GM13977 (cell line): ENCODE measurements at regions of chr18 and their contacts with region 1.

Region 1: GRCh38 chr18:63439334-63439733 is 17.1 kb upstream of the VPS4B start:
- DNase-seq: peak; percentile 58
- CTCF ChIP-seq: peak; percentile 79

Region 2: GRCh38 chr18:62714671-62715435 is 724.5 kb before region 1 on chr18:
- in situ Hi-C with region 1: loop called (anchors 25 kb)
- DNase-seq: peak; percentile 94
- CTCF ChIP-seq: peak; percentile 80

Region 3: DNA sequence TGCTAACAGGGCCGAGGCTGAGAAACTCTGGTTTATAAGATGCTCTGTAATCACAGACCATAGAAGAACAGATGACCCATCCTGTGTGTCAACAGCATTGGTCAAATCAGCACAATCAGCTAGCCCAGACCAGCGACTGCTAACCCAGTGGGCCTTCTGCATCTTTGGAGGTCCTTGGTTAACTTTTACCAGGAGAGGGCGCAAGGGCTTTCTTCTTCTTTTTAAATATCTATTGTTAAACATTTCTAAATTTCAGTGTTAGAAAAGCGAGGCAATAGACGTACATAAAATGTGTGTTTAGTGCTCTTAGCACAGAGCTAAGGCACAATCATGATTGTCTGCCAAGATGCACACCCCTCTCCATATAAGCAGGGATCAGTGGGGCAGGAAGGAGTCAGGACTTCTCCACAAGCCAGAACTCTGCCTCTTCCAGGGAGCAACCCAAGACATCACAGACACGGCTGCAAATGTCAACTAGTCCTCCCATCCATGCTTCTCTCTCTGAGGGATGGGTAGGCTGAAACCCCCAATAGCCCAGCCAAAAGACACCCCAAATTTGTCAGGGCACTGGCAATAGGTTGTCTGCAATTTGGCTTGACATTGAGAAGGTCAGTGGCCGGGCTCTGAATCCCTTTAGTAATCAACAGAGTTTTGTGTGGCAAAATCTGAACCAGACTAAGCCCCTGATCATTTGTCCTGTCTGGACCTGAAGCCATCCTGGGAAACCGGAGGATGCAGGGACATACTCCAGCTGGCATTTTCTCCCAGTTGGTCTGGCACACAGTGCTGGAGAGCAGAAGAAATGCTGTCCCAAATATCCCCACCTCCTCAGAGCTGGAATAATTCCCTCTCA is 308.0 kb before region 1 on chr18:
- in situ Hi-C with region 1: loop called (anchors 25 kb)
- DNase-seq: peak; percentile 51
- CTCF ChIP-seq: peak; percentile 52

Region 4: DNA sequence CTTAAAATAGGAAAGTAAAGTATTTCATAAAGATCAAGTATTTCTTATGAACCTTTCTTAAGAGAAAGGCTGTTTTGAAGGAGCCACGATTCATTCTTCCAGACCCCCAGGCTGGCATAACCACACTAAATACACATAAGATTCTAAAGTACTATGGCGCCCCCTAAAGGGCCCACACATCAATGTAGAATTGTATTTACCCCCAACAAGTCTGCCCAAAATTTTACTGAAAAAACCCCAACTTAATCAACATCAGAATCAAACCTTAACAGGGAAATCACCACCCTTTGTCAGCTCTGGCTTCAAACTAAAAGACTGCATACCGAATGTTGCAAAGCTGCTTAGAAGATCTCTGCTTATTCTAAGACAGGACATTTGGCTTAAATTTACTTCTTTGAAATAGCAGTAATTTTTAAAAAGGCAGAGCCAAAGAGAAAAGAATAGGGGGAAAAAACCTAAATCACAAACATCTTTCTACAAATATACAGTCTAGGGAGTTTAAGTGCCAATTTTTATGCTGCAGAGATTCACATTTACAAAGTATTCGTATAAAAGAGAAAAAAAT is 99.3 kb before region 1 on chr18:
- in situ Hi-C with region 1: loop called (anchors 10 kb)
- DNase-seq: no peak
- CTCF ChIP-seq: peak; percentile 59